AG04450 (cell line): ENCODE measurements at regions of chr3 and their contacts with region 1.

Region 1: GRCh38 chr3:134299185-134299887 is 48.7 kb upstream of the RYK start:
- DNase-seq: no peak
- H3K4me3 ChIP-seq: no peak overlapping the region
- H3K27ac ChIP-seq: no peak overlapping the region
- H3K27me3 ChIP-seq: no peaks in the 10 kb centered on the region
- CTCF ChIP-seq: peak; percentile 55

Region 2: DNA sequence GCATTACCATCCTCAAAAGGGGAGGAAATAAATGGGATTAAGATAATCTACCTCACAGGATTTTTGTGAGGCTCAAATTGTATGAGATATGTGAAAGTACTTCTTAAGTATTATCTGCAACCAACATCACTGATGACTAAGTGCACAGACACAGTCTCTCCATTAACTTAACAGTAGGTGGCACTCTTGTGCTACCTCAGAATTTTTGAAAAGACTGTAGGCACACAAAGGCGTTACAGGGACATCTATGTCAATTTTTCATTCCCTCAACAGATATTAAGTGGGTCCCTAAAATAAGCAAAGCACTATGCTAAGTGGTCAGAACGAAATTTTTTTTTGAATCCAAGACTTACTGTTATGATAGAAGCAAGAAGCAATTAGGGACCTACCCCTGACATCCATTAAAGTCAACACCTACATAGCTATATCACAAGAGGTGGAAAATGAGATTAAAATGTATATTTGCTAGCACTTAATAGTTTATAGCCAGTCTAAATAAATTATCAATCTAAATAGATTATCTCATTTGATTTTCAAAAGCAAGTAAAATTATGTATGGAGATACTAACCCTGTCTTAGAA is 101.6 kb before region 1 on chr3:
- CTCF ChIA-PET with region 1: interaction called, 11 read pairs
- POLR2A ChIA-PET with region 1: no interaction called
- DNase-seq: peak; percentile 44
- H3K4me3 ChIP-seq: no peak overlapping the region
- H3K27ac ChIP-seq: no peak overlapping the region
- H3K27me3 ChIP-seq: no peaks in the 10 kb centered on the region
- CTCF ChIP-seq: peak; percentile 77